ENCODE measurements at regions of chr9 and their contacts with region 1.

Region 1: DNA sequence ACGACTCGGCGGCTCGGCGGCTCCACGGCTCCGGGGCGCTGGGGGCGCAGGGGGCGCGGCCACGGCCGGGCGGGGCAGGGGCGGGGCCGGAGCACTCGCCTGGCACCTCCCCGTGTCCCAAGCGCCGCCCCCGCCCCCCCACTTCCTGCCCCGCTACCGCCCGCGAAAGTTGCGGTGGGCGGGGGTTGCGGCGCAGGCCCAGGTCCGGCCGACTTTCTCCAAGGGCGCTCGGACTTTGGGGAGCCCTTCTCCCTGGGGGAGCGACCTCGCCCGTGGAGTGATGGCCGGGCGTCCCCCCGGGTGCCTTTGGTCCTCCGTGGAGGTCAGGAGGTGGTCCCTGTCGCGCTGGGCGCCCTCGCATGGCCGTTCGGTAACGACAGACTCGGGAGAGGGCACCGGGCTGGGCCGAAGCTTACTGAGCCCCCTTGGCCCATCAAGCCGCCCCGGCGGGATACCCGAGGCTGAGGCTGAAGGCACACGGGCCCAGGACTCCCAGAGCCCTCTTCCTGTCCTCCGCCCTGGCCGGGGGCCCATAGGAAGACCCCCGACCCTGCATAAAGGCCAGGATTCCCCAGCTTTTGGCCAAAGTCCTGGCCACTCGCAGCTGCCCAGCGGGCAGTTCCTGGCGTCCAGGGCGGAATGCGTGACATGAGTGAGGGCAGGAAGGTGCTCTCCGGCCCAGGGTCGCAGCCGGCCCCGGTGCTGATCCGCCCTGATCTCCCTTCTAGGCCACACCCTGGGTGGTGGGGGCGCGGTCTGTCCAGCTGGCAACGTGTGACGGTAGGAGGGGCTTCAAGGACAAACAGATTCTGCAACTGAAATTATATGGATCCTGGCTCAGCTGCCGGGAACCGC is 883 bp upstream of the VAV2 start:
- DNase-seq: peak; percentile 88
- ATAC-seq: peak; percentile 79
- H3K4me3 ChIP-seq: peak overlapping the region; percentile 73
- H3K27ac ChIP-seq: peak overlapping the region; percentile 93
- H3K4me1 ChIP-seq: peaks cover 11% of the 10 kb centered on the region; the same call in 1 of the 2 replicates
- H3K27me3 ChIP-seq: peaks cover 4% of the 10 kb centered on the region; the same call in 1 of the 2 replicates
- CTCF ChIP-seq: peak; percentile 37
- POLR2A ChIP-seq: peak; percentile 65; the same call in 1 of the 2 replicates
- RAD21 ChIP-seq: peak; percentile 20; the same call in 1 of the 2 replicates

Region 2: DNA sequence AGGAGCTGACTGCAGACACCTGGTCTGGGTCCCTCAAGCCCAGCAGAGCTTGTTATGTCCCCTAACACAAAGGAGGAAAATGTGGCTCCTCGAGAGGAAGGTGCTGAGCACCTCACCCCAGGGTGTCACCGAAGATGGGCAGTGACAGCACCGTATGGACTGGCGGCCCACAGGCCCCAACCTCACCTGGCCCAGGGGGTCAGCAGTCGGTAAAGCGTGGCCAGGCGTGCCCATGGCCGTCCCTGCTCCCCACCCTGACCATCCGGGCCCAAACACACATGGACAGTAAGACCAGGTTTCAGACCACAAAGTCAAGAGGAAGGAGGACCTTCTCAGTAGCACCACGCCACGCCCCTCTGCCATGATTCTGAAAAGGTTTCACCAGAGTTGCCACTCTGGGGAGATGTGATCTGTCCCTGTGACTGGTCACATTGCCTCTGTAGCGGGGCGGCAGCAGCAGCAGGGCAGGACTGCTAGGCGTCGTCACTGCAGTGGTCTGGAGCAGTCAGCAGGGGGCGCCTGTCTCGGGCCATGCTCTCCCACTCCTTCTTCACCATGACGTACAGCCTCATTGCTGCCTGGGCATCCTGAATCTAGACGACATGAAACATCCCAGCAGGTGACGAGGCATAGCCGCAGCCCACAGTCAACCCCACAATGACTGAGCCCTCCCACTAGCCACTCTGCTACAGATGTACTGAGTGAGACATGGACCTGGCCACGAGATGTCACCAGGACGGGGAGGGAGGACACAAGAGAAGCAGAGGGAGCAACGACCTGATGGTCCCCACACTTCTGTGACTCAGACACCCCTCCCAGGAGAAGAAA is 586.3 kb before region 1 on chr9:
- CTCF ChIA-PET with region 1: no interaction called
- POLR2A ChIA-PET with region 1: no interaction called
- dilution Hi-C with region 1: no loop called
- in situ Hi-C with region 1: no loop called
- intact Hi-C with region 1: loop called (anchors 5 kb)
- DNase-seq: peak; percentile 70
- ATAC-seq: peak; percentile 96
- H3K4me3 ChIP-seq: no peak overlapping the region
- H3K27ac ChIP-seq: no peak overlapping the region
- H3K4me1 ChIP-seq: peaks cover 2% of the 10 kb centered on the region; the same call in 1 of the 2 replicates
- H3K27me3 ChIP-seq: no peaks in the 10 kb centered on the region
- CTCF ChIP-seq: peak; percentile 86
- POLR2A ChIP-seq: no peak
- RAD21 ChIP-seq: peak; percentile 64

Region 3: DNA sequence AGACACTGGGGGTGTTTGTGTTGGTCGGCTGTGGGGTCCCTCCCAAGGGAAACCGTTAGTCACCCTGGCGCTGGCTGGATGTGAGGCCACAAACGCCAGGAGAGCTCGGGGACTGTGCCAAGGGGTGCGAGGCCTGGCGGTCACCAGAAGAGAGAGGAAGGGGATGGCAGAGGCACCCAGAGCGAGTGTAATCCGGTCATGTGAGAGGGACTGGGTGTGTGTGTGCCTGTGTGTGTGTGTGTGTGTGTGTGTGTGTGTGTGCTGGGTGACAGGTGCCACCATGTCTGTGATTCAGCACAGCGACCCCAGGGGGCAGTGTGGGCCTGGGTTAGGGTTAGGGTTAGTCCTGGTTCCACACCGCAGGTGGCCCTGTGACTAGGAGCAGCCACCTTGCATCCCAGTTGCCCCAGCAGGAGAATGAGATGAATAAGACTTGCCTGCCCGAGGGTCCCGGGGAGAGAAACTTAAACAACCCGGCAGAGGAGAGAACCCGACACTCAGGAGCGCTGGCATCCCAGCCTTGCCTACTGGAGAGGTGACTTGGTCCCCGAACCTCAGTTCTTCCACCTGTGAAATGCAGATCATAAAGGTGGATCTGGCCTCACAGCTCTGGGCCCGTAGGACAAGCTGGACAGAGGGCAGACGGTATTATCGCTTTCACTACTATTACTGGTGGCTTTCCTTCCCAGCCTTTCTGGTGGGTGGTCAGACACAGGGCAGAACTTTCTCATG is 459.9 kb before region 1 on chr9:
- CTCF ChIA-PET with region 1: interaction called, 3 read pairs
- POLR2A ChIA-PET with region 1: no interaction called
- dilution Hi-C with region 1: no loop called
- in situ Hi-C with region 1: loop called (anchors 10 kb)
- intact Hi-C with region 1: no loop called
- DNase-seq: peak; percentile 29
- ATAC-seq: peak; percentile 38; the same call in 1 of the 2 replicates
- H3K4me3 ChIP-seq: no peak overlapping the region
- H3K27ac ChIP-seq: no peak overlapping the region
- H3K4me1 ChIP-seq: peaks cover 1% of the 10 kb centered on the region; the same call in 1 of the 2 replicates
- H3K27me3 ChIP-seq: peaks cover 64% of the 10 kb centered on the region
- CTCF ChIP-seq: peak; percentile 58
- POLR2A ChIP-seq: no peak
- RAD21 ChIP-seq: peak; percentile 78

Region 4: GRCh38 chr9:133782157-133783130 is 210.6 kb before region 1 on chr9:
- CTCF ChIA-PET with region 1: interaction called, 24 read pairs
- POLR2A ChIA-PET with region 1: interaction called, 3 read pairs
- dilution Hi-C with region 1: no loop called
- in situ Hi-C with region 1: loop called (anchors 5 kb)
- intact Hi-C with region 1: loop called (anchors 1 kb)
- DNase-seq: peak; percentile 62
- ATAC-seq: peak; percentile 96
- H3K4me3 ChIP-seq: no peak overlapping the region
- H3K27ac ChIP-seq: no peak overlapping the region
- H3K4me1 ChIP-seq: no peaks in the 10 kb centered on the region
- H3K27me3 ChIP-seq: no peaks in the 10 kb centered on the region
- CTCF ChIP-seq: peak; percentile 84
- POLR2A ChIP-seq: no peak
- RAD21 ChIP-seq: peak; percentile 72

Region 5: DNA sequence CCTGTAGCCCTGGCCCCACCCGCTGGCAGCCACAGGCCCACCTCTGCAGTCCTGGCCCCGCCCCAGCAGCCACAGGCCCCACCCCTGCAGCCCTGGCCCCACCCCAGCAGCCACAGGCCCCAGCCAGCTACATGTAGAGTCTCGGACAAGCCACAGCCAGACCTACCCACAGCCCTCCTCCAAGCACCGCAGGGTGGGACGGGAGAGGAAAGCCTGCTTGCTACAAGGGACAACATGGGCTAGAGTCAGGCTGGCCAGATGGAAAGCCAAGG is 205.3 kb before region 1 on chr9:
- CTCF ChIA-PET with region 1: interaction called, 24 read pairs
- POLR2A ChIA-PET with region 1: no interaction called
- dilution Hi-C with region 1: no loop called
- in situ Hi-C with region 1: loop called (anchors 5 kb)
- intact Hi-C with region 1: loop called (anchors 1 kb)
- DNase-seq: no peak
- ATAC-seq: peak; percentile 72
- H3K4me3 ChIP-seq: no peak overlapping the region
- H3K27ac ChIP-seq: no peak overlapping the region
- H3K4me1 ChIP-seq: no peaks in the 10 kb centered on the region
- H3K27me3 ChIP-seq: no peaks in the 10 kb centered on the region
- CTCF ChIP-seq: no peak
- POLR2A ChIP-seq: no peak
- RAD21 ChIP-seq: no peak

Region 6: DNA sequence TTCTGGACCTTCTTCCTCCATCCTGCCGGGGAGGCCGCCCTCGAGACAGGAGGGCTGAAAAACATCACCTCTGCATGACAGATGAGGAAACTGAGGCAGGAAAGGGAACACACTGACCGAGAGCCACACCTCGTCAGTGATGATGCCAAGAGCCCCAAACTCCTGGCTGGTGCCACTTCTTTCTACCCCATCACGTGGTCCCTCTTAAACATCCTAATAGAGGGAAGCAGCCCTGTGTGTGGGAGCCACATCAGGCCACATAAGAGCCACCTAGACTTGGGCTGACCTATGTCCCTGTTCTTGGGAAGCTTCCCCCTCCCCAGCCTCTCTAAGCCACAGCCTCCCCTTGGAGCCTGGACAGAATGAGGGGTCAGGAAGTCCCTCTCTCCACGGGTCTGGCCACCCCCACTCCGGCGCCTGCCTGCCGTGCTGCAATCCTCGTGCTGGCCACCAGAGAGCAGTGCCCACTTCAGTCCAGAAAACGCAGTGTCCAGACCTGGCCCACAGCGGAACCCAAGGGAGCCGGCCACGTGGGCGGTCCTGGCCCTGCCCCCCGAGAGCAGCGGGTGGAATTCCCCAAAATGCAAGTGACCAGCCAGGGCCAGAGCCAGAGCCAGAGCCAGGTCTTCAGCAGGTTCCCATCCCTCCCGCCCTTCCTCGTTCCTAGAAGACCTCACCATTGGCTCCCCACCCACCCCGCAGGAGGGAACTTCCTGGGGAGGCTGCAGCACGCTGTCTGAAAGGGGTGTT is 200.1 kb before region 1 on chr9:
- CTCF ChIA-PET with region 1: interaction called, 3 read pairs
- POLR2A ChIA-PET with region 1: interaction called, 3 read pairs
- dilution Hi-C with region 1: no loop called
- in situ Hi-C with region 1: loop called (anchors 5 kb)
- intact Hi-C with region 1: loop called (anchors 1 kb)
- DNase-seq: peak; percentile 73
- ATAC-seq: peak; percentile 99
- H3K4me3 ChIP-seq: no peak overlapping the region
- H3K27ac ChIP-seq: no peak overlapping the region
- H3K4me1 ChIP-seq: peaks cover 2% of the 10 kb centered on the region; the same call in 1 of the 2 replicates
- H3K27me3 ChIP-seq: no peaks in the 10 kb centered on the region
- CTCF ChIP-seq: peak; percentile 96
- POLR2A ChIP-seq: 0 out of 2 replicates have a peak, but pooled peaks have one; percentile 35
- RAD21 ChIP-seq: peak; percentile 94

Region 7: DNA sequence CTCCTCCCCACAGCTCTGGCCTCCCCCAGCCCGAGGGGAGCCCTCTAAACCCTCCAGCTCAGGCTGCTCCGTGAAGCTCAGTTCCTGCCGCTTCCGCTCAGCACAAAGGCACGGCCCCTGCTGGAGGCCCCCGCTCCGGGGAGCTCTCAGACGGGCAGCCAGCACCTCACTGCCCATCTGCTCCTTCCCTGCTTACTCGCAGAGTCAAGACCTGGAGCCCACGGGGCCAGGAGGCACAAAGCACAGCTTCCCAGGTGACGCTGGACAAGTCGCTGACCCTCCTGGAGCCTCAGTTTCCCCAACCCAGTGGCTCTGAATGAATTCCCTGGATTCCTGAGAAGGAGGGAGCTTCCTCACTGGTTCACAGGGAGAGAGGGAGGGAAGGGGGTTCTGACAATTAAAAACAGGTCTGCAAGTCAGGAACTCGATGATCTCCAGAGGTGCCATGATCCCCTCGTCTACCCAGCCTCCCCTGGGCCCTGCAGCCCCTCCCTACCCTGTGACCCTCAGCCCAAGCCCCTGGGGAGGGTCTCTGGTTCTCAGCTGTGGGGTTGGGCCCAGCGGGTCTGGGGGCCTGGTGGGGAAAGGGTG is 37.1 kb before region 1 on chr9:
- CTCF ChIA-PET with region 1: no interaction called
- POLR2A ChIA-PET with region 1: no interaction called
- dilution Hi-C with region 1: no loop called
- in situ Hi-C with region 1: no loop called
- intact Hi-C with region 1: no loop called
- DNase-seq: peak; percentile 47
- ATAC-seq: peak; percentile 72
- H3K4me3 ChIP-seq: no peak overlapping the region
- H3K27ac ChIP-seq: peak overlapping the region; percentile 50; the same call in 1 of the 2 replicates
- H3K4me1 ChIP-seq: peaks cover 29% of the 10 kb centered on the region
- H3K27me3 ChIP-seq: no peaks in the 10 kb centered on the region
- CTCF ChIP-seq: 0 out of 2 replicates have a peak, but pooled peaks have one; percentile 14
- POLR2A ChIP-seq: no peak
- RAD21 ChIP-seq: no peak

Region 8: GRCh38 chr9:133968966-133969617 is 23.9 kb before region 1 on chr9:
- CTCF ChIA-PET with region 1: interaction called, 13 read pairs
- POLR2A ChIA-PET with region 1: no interaction called
- dilution Hi-C with region 1: no loop called
- in situ Hi-C with region 1: no loop called
- intact Hi-C with region 1: no loop called
- DNase-seq: no peak
- ATAC-seq: no peak
- H3K4me3 ChIP-seq: no peak overlapping the region
- H3K27ac ChIP-seq: no peak overlapping the region
- H3K4me1 ChIP-seq: no peaks in the 10 kb centered on the region
- H3K27me3 ChIP-seq: no peaks in the 10 kb centered on the region
- CTCF ChIP-seq: no peak
- POLR2A ChIP-seq: no peak
- RAD21 ChIP-seq: no peak

Measured in IMR-90 (cell line).